Ovary (tissue), 10 donors: ENCODE measurements at regions of chr9 and their contacts with region 1.

Region 1: GRCh38 chr9:93365427-93366118 is 85.9 kb upstream of the FAM120A start:
- DNase-seq: no peak
- H3K4me3 ChIP-seq: no peak overlapping the region
- H3K27ac ChIP-seq: no peak overlapping the region
- H3K4me1 ChIP-seq: no peaks in the 10 kb centered on the region
- H3K27me3 ChIP-seq: no peaks in the 10 kb centered on the region
- CTCF ChIP-seq: no peak
- EP300 ChIP-seq: no peak
- POLR2A ChIP-seq: no peak

Region 2: GRCh38 chr9:93302551-93303257 is 62.9 kb before region 1 on chr9:
- intact Hi-C with region 1: no loop called
- DNase-seq: peak in 3 of 5 donors; percentile 13 to 39 (median 20)
- H3K4me3 ChIP-seq: no peak overlapping the region
- H3K27ac ChIP-seq: no peak overlapping the region
- H3K4me1 ChIP-seq: peaks cover 6% of the 10 kb centered on the region
- H3K27me3 ChIP-seq: no peaks in the 10 kb centered on the region
- CTCF ChIP-seq: no peak
- EP300 ChIP-seq: no peak
- POLR2A ChIP-seq: no peak

Region 3: DNA sequence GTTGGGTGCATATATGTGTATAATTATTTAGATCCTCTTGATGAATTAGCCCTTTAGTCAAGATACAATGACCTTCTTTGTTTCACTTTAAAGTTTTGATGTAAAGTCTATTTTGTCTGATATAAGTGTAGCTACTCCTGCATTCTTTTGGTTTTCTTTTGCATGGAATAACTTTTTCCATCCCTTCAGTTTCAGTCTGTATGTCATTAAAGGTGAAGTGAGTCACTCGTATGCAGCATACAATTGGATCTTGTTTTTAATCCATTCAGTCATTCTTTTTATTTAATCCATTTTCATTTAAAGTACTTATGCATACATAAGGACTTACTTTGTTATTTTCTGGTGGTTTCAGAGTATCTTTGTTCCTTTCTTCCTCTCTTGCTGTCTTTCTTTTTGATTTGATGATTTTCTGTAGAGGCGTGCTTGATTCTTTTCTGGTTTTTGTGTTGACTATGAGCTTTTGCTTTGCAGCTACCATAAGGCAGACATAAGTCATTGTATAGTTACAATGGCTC is 49.7 kb after region 1 on chr9:
- intact Hi-C with region 1: loop called in 1 of 4 experiments (anchors 10 kb)
- DNase-seq: no peak
- H3K4me3 ChIP-seq: no peak overlapping the region
- H3K27ac ChIP-seq: no peak overlapping the region
- H3K4me1 ChIP-seq: no peaks in the 10 kb centered on the region
- H3K27me3 ChIP-seq: no peaks in the 10 kb centered on the region
- CTCF ChIP-seq: no peak
- EP300 ChIP-seq: no peak
- POLR2A ChIP-seq: no peak

Region 4: GRCh38 chr9:94197607-94198006 is 832.0 kb after region 1 on chr9:
- intact Hi-C with region 1: no loop called
- DNase-seq: no peak
- H3K4me3 ChIP-seq: no peak overlapping the region
- H3K27ac ChIP-seq: no peak overlapping the region
- H3K4me1 ChIP-seq: no peaks in the 10 kb centered on the region
- H3K27me3 ChIP-seq: no peaks in the 10 kb centered on the region
- CTCF ChIP-seq: no peak
- EP300 ChIP-seq: no peak
- POLR2A ChIP-seq: no peak